OCI-LY7 (cell line): ENCODE measurements at regions of chr9 and their contacts with region 1.

Region 1: DNA sequence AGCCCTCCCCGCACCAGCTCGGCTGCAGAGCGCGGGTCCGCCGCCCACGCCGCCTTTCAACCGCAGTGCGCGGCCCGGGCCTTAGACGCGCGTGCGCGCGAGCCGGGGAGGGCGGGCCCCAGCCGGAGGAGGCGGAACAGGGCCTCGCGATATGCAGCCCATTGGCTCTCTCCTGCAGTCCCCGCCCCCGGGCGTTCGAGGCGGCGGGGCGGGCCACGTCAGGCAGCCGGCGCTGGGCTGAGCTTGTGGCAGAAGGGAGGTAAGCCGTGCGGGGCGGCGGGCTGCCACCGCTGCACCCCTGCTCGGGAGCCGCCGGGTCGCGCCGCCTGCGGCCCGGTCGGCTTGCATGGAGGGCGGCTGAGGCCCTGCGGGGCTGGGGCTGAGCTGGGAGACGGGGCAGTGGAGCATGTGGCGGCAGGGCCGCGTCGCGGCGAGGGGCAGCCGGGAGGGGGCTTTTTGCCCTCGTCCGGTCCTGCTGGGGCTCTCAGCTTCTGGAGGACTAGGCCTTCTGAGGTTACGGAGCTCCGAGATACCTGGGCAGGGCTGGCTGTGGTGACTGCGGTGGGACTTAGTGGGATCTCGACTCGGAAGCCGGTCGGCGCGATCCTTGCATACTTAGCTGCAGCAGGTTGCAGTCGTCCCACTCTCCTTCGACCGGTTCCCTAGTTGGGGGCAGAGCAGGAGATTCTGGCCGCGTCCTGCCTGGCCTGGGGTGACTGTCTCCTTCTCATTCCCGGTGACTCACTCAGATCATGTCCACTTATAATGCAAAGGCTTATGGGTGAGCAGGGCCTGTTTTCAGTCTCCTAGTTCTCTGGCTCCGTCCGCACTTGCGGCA is at the start of gene FOCAD:
- DNase-seq: peak; percentile 95
- H3K4me3 ChIP-seq: peak within 1 kb of the TSS; percentile 83
- H3K27ac ChIP-seq: peak within 1 kb of the TSS; percentile 29
- H3K4me1 ChIP-seq: peaks cover 16% of the 10 kb centered on the region
- CTCF ChIP-seq: no peak
- total RNA-seq, gene FOCAD: 12.4 and 13.8 TPM in 2 replicates

Region 2: DNA sequence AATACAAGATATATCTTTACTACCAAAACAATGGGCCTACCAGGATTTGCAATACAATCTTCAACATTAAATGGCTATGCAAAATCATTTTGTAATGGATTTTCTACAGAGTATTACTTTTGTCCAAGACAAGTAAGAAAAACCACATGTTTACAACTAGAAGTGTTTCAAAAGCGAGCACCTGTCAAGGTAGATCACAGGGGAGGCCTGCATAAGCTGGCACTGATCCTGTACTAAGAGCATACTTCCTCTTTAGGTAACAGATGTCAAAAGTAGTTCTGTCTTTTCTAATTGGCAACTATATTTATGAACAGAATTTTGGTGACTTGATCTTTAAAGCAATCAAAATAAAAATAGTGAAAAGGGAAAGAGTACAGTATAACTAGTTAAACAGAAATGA is 311.0 kb before region 1 on chr9:
- CTCF ChIA-PET with region 1: no interaction called
- POLR2A ChIA-PET with region 1: interaction called, 6 read pairs
- intact Hi-C with region 1: loop called (anchors 2 kb)
- DNase-seq: peak; percentile 75
- H3K4me3 ChIP-seq: no peak overlapping the region
- H3K27ac ChIP-seq: peak overlapping the region; percentile 77
- H3K4me1 ChIP-seq: peaks cover 48% of the 10 kb centered on the region
- CTCF ChIP-seq: no peak

Region 3: GRCh38 chr9:21102305-21102704 is 418.1 kb after region 1 on chr9:
- CTCF ChIA-PET with region 1: no interaction called
- POLR2A ChIA-PET with region 1: interaction called, 3 read pairs
- intact Hi-C with region 1: loop called (anchors 10 kb)
- DNase-seq: no peak
- H3K4me3 ChIP-seq: no peak overlapping the region
- H3K27ac ChIP-seq: no peak overlapping the region
- H3K4me1 ChIP-seq: peaks cover 7% of the 10 kb centered on the region
- CTCF ChIP-seq: no peak